Activated T-helper 2 cell treated with anti-CD3 and anti-CD28 coated beads, Interferon-gamma antibody, Interleukin-2, Interleukin-4, amounts not matched to agents 10 μg/mL and 5 μg/mL and 100 μg/mL, durations not matched to agents 14 hours and 24 hours and 36 hours (primary cell): ENCODE measurements at regions of chr7 and their contacts with region 1.

Region 1: DNA sequence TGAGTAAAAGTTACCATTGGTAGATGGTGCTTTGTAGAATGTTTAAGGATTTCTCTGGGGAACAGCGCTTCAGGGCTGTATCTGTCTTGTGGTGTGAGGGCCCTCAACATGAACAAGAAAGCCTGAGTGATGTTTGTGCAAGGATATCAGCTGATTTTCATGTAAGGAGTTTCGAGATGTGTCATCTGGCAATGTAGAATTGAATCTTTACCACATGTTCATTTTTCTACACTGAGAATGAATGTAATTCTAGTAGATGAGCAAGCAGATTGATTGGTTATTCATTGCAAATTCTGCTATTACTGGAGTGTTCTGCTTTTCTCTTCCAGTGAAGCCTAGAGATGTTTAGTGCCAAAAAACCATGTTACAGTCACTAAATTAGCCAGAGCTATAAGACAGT is 87.7 kb downstream of the ST7 start:
- DNase-seq: no peak
- H3K4me3 Mint-ChIP-seq: no peak overlapping the region
- H3K27ac Mint-ChIP-seq: no peak overlapping the region
- H3K4me1 Mint-ChIP-seq: peaks cover 12% of the 10 kb centered on the region
- H3K27me3 Mint-ChIP-seq: peaks cover 28% of the 10 kb centered on the region

Region 2: GRCh38 chr7:116876664-116877442 is 164.2 kb before region 1 on chr7:
- intact Hi-C with region 1: no loop called
- DNase-seq: no peak
- H3K4me3 Mint-ChIP-seq: no peak overlapping the region
- H3K27ac Mint-ChIP-seq: no peak overlapping the region
- H3K4me1 Mint-ChIP-seq: peaks cover 23% of the 10 kb centered on the region
- H3K27me3 Mint-ChIP-seq: no peaks in the 10 kb centered on the region

Region 3: DNA sequence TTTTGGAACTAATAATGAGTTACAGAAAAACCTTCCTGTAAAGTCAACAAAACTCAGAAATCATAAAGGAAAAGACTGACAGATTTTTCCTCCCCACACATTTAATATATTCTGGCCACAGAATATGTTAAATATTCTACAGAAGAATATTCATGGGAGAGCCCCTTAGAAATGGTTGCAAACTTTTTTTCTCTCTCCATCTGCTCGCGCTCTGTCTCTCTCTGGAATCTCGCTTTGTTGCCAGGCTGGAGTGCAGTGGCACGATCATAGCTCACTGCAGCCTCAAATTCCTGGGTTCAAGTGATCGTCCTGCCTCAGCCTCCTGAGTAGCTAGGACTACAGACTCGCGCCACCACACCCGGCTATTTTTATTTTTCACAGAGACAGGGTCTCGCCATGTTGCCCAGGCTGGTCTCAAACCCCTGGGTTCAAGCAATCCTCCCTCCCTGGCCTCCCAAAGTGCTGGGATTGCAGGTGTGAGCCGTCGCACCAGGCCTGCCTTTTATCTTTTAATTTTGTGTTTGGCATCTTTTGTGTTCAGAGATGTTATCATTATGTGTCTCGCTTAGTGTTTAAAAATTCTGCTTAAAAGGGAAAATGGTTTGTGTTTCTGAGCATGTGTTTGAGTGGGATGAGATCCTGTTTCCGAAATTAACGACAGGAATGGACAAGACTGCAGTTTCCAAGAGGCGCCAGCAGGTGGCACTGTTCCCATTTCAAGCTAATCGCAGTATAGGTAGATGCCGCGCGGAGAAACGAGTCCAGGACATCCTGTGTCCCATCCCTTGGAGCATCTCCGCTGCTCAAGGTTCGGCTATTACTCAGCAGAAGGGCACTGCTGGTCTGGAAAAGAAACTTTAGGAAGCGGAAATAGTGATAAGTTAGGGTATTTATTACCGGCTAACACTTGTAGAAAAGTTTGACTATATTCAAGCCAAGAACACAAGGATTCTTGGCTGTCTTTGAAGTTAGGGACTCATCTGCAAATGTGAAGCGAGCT is 110.8 kb before region 1 on chr7:
- intact Hi-C with region 1: no loop called
- DNase-seq: peak; percentile 54
- H3K4me3 Mint-ChIP-seq: no peak overlapping the region
- H3K27ac Mint-ChIP-seq: no peak overlapping the region
- H3K4me1 Mint-ChIP-seq: peaks cover 1% of the 10 kb centered on the region
- H3K27me3 Mint-ChIP-seq: peaks cover 10% of the 10 kb centered on the region

Region 4: GRCh38 chr7:116988363-116988989 is 52.5 kb before region 1 on chr7:
- intact Hi-C with region 1: no loop called
- DNase-seq: no peak
- H3K4me3 Mint-ChIP-seq: no peak overlapping the region
- H3K27ac Mint-ChIP-seq: no peak overlapping the region
- H3K4me1 Mint-ChIP-seq: peaks cover 4% of the 10 kb centered on the region
- H3K27me3 Mint-ChIP-seq: peaks cover 9% of the 10 kb centered on the region

Region 5: GRCh38 chr7:117014673-117015133 is 26.3 kb before region 1 on chr7:
- intact Hi-C with region 1: loop called (anchors 1 kb)
- DNase-seq: no peak
- H3K4me3 Mint-ChIP-seq: no peak overlapping the region
- H3K27ac Mint-ChIP-seq: no peak overlapping the region
- H3K4me1 Mint-ChIP-seq: peaks cover 53% of the 10 kb centered on the region
- H3K27me3 Mint-ChIP-seq: peaks cover 7% of the 10 kb centered on the region

Region 6: DNA sequence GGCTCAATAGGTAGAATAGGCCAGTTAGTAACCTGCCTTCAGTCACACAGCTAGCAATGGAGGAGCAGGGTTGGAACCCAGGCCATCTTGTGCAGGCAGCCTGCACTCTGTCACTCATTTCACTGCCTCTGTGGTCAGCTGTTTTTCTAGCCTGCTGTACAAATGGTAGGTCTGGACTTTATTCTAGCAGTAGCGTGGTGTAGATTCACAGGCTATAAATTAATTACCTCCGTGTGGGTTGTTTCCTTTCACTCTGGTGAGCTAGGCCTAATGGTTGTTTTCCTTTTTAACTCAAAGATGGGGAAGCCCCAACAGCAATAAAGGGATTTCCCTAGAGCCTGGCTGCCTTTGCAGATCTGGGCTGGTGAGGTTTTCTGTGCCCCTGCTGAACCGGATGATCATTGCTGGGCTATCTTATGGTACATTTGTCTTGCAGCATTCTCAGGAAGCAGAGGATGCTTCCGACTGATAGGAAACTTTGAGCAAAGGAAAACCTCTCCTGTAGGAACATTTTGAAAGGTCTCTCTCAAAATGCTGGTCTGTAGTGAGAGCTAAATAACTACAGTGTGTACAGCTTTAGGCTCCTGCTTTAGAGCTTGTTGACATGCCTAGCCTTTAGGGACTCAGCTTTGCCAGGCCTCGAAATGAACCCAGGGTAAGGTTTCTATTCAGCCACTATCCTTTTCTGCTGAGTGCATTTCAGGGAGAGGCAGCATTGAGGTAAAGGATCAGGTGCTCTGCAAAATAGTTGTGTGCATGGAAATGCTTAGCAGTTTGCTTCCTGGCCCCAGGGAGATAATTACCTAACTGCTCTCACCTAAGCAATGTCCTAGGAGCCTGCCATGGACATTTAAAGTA is 69.7 kb after region 1 on chr7:
- intact Hi-C with region 1: loop called (anchors 2 kb)
- DNase-seq: peak; percentile 18
- H3K4me3 Mint-ChIP-seq: no peak overlapping the region
- H3K27ac Mint-ChIP-seq: peak overlapping the region; percentile 19
- H3K4me1 Mint-ChIP-seq: peaks cover 35% of the 10 kb centered on the region
- H3K27me3 Mint-ChIP-seq: peaks cover 5% of the 10 kb centered on the region